ENCODE measurements at regions of chr3 and their contacts with region 1.

Region 1: GRCh38 chr3:107660306-107660976 is 137.7 kb downstream of the BBX start:
- DNase-seq: no peak
- ATAC-seq: no peak
- H3K4me3 Mint-ChIP-seq: no peak overlapping the region
- H3K27ac Mint-ChIP-seq: no peak overlapping the region
- H3K4me1 Mint-ChIP-seq: peaks cover 26% of the 10 kb centered on the region
- H3K27me3 Mint-ChIP-seq: no peaks in the 10 kb centered on the region
- CTCF ChIP-seq: peak; percentile 68

Region 2: DNA sequence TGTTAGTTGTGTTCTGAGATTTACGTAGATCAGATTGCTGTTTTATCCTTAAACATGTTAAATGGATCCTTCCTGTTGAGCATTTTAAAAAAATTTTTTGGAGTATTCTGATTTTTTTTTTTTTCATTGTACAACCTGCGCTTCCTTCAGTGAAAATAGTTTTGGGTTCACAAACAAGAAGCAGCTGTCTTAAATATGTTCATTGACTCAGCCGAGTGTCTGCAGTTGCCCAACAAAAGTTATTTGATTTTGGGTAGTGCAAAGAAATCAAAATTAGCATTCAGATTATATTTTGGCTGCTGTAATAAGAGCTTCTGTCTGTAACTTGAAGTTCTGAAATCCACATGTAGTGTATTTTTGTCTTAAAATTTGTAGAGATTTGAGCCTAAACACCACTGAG is 10.5 kb after region 1 on chr3:
- CTCF ChIA-PET with region 1: interaction called, 60 read pairs
- POLR2A ChIA-PET with region 1: no interaction called
- intact Hi-C with region 1: no loop called
- DNase-seq: no peak
- ATAC-seq: no peak
- H3K4me3 Mint-ChIP-seq: no peak overlapping the region
- H3K27ac Mint-ChIP-seq: no peak overlapping the region
- H3K4me1 Mint-ChIP-seq: peaks cover 21% of the 10 kb centered on the region
- H3K27me3 Mint-ChIP-seq: no peaks in the 10 kb centered on the region
- CTCF ChIP-seq: no peak

Region 3: DNA sequence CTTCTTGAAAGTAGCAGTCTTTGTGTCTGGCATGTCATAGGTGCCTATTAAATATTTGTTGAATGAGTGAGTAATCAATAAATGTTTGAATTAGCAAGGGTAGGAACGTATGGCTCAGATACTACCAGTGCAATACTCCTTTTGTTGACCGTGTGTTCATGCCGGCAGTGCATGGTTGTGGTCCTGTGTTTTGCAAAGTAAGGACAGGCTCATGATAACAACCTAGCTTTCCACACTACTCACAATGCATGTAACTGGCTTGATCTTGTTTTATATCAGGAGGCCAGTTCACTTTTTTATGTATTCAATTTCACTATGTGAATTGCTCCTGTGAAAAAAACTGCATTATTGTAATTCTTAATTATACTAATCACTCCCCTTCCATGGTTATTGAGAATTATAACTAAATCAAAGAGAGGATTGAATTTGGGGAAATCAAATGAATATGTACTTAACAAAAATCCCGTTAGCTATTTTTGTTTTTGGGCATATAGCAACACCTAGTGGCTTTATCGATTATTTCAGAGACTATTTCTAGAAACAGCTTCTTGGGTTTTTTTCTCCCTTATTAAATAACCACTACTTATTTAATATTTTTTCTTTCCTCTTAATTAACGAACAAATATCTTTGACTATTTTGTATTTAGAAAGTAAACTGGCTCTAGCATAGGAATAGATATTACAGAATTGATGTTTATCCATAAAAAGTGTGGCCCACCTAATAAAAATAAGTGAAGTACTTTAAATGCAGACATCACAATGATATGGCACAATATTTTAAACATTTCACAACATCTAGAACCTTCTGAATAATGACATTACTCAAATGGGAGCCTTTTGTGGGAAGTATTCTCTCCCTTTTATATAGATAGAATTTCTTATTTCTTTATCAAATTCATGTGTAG is 80.8 kb after region 1 on chr3:
- CTCF ChIA-PET with region 1: interaction called, 12 read pairs
- POLR2A ChIA-PET with region 1: no interaction called
- intact Hi-C with region 1: no loop called
- DNase-seq: no peak
- ATAC-seq: no peak
- H3K4me3 Mint-ChIP-seq: no peak overlapping the region
- H3K27ac Mint-ChIP-seq: no peak overlapping the region
- H3K4me1 Mint-ChIP-seq: no peaks in the 10 kb centered on the region
- H3K27me3 Mint-ChIP-seq: no peaks in the 10 kb centered on the region
- CTCF ChIP-seq: no peak

Region 4: DNA sequence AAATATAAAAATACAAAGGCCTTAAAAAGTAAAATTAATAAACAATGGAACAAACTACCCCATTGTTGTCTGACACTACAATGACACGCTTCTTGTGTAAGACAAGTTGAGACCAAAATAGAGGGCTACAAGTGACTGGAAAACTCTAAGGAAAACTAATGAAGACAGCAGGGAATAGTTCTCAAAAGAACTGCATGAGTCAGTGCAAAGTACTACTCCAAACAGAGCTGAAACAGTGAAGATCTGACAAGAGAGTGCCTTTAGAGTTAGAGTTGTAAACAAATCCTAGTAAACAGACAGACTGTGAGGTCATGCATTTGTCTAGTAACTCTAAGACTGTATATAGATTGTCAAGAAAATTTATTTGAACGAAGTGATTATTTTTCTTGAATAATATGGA is 96.2 kb after region 1 on chr3:
- CTCF ChIA-PET with region 1: no interaction called
- POLR2A ChIA-PET with region 1: no interaction called
- intact Hi-C with region 1: no loop called
- DNase-seq: no peak
- ATAC-seq: no peak
- H3K4me3 Mint-ChIP-seq: no peak overlapping the region
- H3K27ac Mint-ChIP-seq: no peak overlapping the region
- H3K4me1 Mint-ChIP-seq: no peaks in the 10 kb centered on the region
- H3K27me3 Mint-ChIP-seq: no peaks in the 10 kb centered on the region
- CTCF ChIP-seq: no peak

Measured in activated CD8-positive, alpha-beta T cell treated with anti-CD3 and anti-CD28 coated beads for 36 hours (primary cell).